Activated CD4-positive, alpha-beta T cell treated with anti-CD3 and anti-CD28 coated beads for 36 hours (primary cell): ENCODE measurements at regions of chr14 and their contacts with region 1.

Region 1: GRCh38 chr14:51873221-51873893 is 12.9 kb downstream of the GNG2 start:
- DNase-seq: peak; percentile 63
- ATAC-seq: peak; percentile 83
- H3K4me3 Mint-ChIP-seq: peak overlapping the region; percentile 42
- H3K27ac Mint-ChIP-seq: peak overlapping the region; percentile 79
- H3K4me1 Mint-ChIP-seq: peaks cover 62% of the 10 kb centered on the region
- H3K27me3 Mint-ChIP-seq: no peaks in the 10 kb centered on the region

Region 2: GRCh38 chr14:51211149-51211548 is 662.2 kb before region 1 on chr14:
- CTCF ChIA-PET with region 1: no interaction called
- POLR2A ChIA-PET with region 1: no interaction called
- intact Hi-C with region 1: no loop called
- DNase-seq: no peak
- ATAC-seq: no peak
- H3K4me3 Mint-ChIP-seq: no peak overlapping the region
- H3K27ac Mint-ChIP-seq: no peak overlapping the region
- H3K4me1 Mint-ChIP-seq: no peaks in the 10 kb centered on the region
- H3K27me3 Mint-ChIP-seq: peaks cover 17% of the 10 kb centered on the region

Region 3: GRCh38 chr14:51860164-51860824 is 13.1 kb before region 1 on chr14 and contains the start of gene GNG2:
- CTCF ChIA-PET with region 1: interaction called, 3 read pairs
- POLR2A ChIA-PET with region 1: interaction called, 7 read pairs
- intact Hi-C with region 1: loop called (anchors 1 kb)
- DNase-seq: peak; percentile 90
- ATAC-seq: peak; percentile 93
- H3K4me3 Mint-ChIP-seq: peak within 1 kb of the TSS; percentile 90
- H3K27ac Mint-ChIP-seq: peak within 1 kb of the TSS; percentile 82
- H3K4me1 Mint-ChIP-seq: peaks cover 50% of the 10 kb centered on the region
- H3K27me3 Mint-ChIP-seq: no peaks in the 10 kb centered on the region
- total RNA-seq, gene GNG2: 133 to 136 TPM

Region 4: GRCh38 chr14:51901475-51902024 is 28.2 kb after region 1 on chr14:
- CTCF ChIA-PET with region 1: interaction called, 3 read pairs
- POLR2A ChIA-PET with region 1: interaction called, 3 read pairs
- intact Hi-C with region 1: loop called (anchors 1 kb)
- DNase-seq: no peak
- ATAC-seq: no peak
- H3K4me3 Mint-ChIP-seq: no peak overlapping the region
- H3K27ac Mint-ChIP-seq: no peak overlapping the region
- H3K4me1 Mint-ChIP-seq: peaks cover 61% of the 10 kb centered on the region
- H3K27me3 Mint-ChIP-seq: no peaks in the 10 kb centered on the region

Region 5: DNA sequence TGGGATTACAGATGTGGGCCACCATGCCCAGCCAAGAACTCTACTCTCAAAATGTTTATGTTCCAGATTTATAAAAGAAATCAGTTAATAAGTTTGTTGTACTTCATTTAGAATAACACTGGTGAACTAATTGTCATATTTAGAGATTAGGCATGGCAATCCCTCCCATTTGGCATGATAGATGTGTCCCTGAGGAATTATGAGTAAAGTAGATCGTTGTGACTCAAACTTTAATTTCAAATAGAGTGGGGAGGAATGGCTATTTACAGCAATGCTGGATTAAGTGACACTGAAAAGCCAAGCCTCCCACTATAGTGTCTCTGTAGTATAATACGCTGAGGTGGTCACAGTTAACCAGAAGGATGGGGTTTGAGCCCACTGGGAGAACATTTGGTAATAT is 76.7 kb after region 1 on chr14:
- CTCF ChIA-PET with region 1: no interaction called
- POLR2A ChIA-PET with region 1: no interaction called
- intact Hi-C with region 1: no loop called
- DNase-seq: no peak
- ATAC-seq: no peak
- H3K4me3 Mint-ChIP-seq: no peak overlapping the region
- H3K27ac Mint-ChIP-seq: no peak overlapping the region
- H3K4me1 Mint-ChIP-seq: peaks cover 2% of the 10 kb centered on the region
- H3K27me3 Mint-ChIP-seq: no peaks in the 10 kb centered on the region